A673 (cell line): ENCODE measurements at regions of chr14 and their contacts with region 1.

Region 1: DNA sequence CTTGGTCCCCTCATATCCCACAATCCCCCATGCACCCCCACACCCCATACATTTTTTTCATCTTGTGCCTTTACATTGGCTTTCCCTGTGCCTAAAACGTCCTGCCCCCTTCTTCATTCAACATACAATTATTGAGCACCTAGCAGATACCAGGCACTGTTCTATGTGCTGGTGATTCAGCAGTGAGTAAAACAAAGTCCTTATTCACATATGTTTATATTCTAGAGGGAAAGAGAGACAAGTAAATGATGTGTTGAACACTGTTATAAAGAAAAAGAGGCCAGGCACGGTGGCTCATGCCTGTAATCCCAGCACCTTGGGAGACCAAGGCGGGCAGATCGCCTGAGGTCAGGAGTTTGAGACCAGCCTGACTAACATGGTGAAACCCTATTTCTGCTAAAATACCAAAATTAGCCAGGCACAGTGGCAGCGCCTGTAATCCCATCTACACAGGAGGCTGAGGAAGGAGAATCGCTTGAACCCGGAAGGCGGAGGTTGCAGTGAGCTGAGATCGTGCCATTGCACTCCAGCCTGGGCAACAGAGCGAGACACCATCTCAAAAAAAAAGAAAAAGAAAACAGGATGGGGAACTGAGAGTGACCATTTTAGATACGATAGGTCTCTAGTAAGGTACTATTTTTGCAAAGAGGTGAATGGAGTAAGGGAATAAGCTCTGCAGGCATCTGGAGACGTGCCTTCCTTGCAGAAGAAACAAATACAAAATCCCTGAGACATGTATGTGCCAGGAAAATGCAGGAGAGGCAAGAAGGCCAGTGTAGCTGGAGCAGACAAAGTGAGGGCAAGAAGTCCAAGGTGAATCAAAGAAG is 12.2 kb downstream of the SLC7A7 start:
- DNase-seq: no peak
- H3K4me3 ChIP-seq: no peak overlapping the region
- H3K27ac ChIP-seq: no peak overlapping the region
- H3K4me1 ChIP-seq: no peaks in the 10 kb centered on the region
- H3K27me3 ChIP-seq: no peaks in the 10 kb centered on the region
- CTCF ChIP-seq: no peak

Region 2: GRCh38 chr14:22753586-22753985 is 49.5 kb before region 1 on chr14:
- CTCF ChIA-PET with region 1: no interaction called
- POLR2A ChIA-PET with region 1: no interaction called
- intact Hi-C with region 1: no loop called
- DNase-seq: peak; percentile 33
- H3K4me3 ChIP-seq: no peak overlapping the region
- H3K27ac ChIP-seq: no peak overlapping the region
- H3K4me1 ChIP-seq: no peaks in the 10 kb centered on the region
- H3K27me3 ChIP-seq: no peaks in the 10 kb centered on the region
- CTCF ChIP-seq: no peak

Region 3: GRCh38 chr14:22766456-22767322 is 36.4 kb before region 1 on chr14 and contains the start of gene OXA1L:
- CTCF ChIA-PET with region 1: interaction called, 13 read pairs
- POLR2A ChIA-PET with region 1: no interaction called
- intact Hi-C with region 1: no loop called
- DNase-seq: peak; percentile 98
- H3K4me3 ChIP-seq: peak within 1 kb of the TSS; percentile 71
- H3K27ac ChIP-seq: peak within 1 kb of the TSS; percentile 84
- H3K4me1 ChIP-seq: peaks cover 12% of the 10 kb centered on the region
- H3K27me3 ChIP-seq: no peaks in the 10 kb centered on the region
- CTCF ChIP-seq: no peak
- total RNA-seq, gene OXA1L: 103 and 107 TPM in 2 replicates

Region 4: GRCh38 chr14:22822571-22823098 is 19.6 kb after region 1 on chr14:
- CTCF ChIA-PET with region 1: interaction called, 15 read pairs
- POLR2A ChIA-PET with region 1: no interaction called
- intact Hi-C with region 1: no loop called
- DNase-seq: peak; percentile 93
- H3K4me3 ChIP-seq: peak overlapping the region; percentile 29
- H3K27ac ChIP-seq: peak overlapping the region; percentile 8
- H3K4me1 ChIP-seq: peaks cover 25% of the 10 kb centered on the region
- H3K27me3 ChIP-seq: no peaks in the 10 kb centered on the region
- CTCF ChIP-seq: peak; percentile 93